Activated T-helper 2 cell treated with anti-CD3 and anti-CD28 coated beads, Interferon-gamma antibody, Interleukin-2, Interleukin-4, amounts not matched to agents 10 μg/mL and 5 μg/mL and 100 μg/mL, durations not matched to agents 14 hours and 24 hours and 36 hours (primary cell): ENCODE measurements at regions of chr21 and their contacts with region 1.

Region 1: GRCh38 chr21:34986561-34987500 is 62.3 kb downstream of the RUNX1 start:
- DNase-seq: peak; percentile 66
- H3K4me3 Mint-ChIP-seq: peak overlapping the region; percentile 75
- H3K27ac Mint-ChIP-seq: peak overlapping the region; percentile 94
- H3K4me1 Mint-ChIP-seq: peaks cover 87% of the 10 kb centered on the region
- H3K27me3 Mint-ChIP-seq: no peaks in the 10 kb centered on the region

Region 2: GRCh38 chr21:34933609-34934335 is 53.1 kb before region 1 on chr21:
- intact Hi-C with region 1: loop called (anchors 2 kb)
- DNase-seq: peak; percentile 37
- H3K4me3 Mint-ChIP-seq: peak overlapping the region; percentile 72
- H3K27ac Mint-ChIP-seq: peak overlapping the region; percentile 91
- H3K4me1 Mint-ChIP-seq: peaks cover 83% of the 10 kb centered on the region
- H3K27me3 Mint-ChIP-seq: no peaks in the 10 kb centered on the region

Region 3: GRCh38 chr21:34974162-34974981 is 12.5 kb before region 1 on chr21:
- intact Hi-C with region 1: loop called (anchors 1 kb)
- DNase-seq: peak; percentile 65
- H3K4me3 Mint-ChIP-seq: peak overlapping the region; percentile 67
- H3K27ac Mint-ChIP-seq: peak overlapping the region; percentile 86
- H3K4me1 Mint-ChIP-seq: peaks cover 77% of the 10 kb centered on the region
- H3K27me3 Mint-ChIP-seq: no peaks in the 10 kb centered on the region

Region 4: GRCh38 chr21:35026617-35027562 is 40.1 kb after region 1 on chr21:
- intact Hi-C with region 1: loop called (anchors 2 kb)
- DNase-seq: peak; percentile 87
- H3K4me3 Mint-ChIP-seq: peak overlapping the region; percentile 90
- H3K27ac Mint-ChIP-seq: peak overlapping the region; percentile 100
- H3K4me1 Mint-ChIP-seq: peaks cover 86% of the 10 kb centered on the region
- H3K27me3 Mint-ChIP-seq: no peaks in the 10 kb centered on the region

Region 5: GRCh38 chr21:35226948-35227744 is 240.3 kb after region 1 on chr21:
- intact Hi-C with region 1: loop called (anchors 10 kb)
- DNase-seq: peak; percentile 52
- H3K4me3 Mint-ChIP-seq: peak overlapping the region; percentile 37
- H3K27ac Mint-ChIP-seq: peak overlapping the region; percentile 72
- H3K4me1 Mint-ChIP-seq: peaks cover 52% of the 10 kb centered on the region
- H3K27me3 Mint-ChIP-seq: no peaks in the 10 kb centered on the region